ENCODE measurements at regions of chr1 and their contacts with region 1.

Region 1: GRCh38 chr1:65075123-65075976 is 72.7 kb upstream of the AK4 start:
- DNase-seq: no peak
- ATAC-seq: peak; percentile 73 to 98 (median 90)
- H3K4me3 ChIP-seq: no peak overlapping the region
- H3K27ac ChIP-seq: no peak overlapping the region
- H3K4me1 ChIP-seq: no peaks in the 10 kb centered on the region
- H3K27me3 ChIP-seq: no peaks in the 10 kb centered on the region
- CTCF ChIP-seq: peak; percentile 77

Region 2: GRCh38 chr1:64686828-64687724 is 388.3 kb before region 1 on chr1:
- intact Hi-C with region 1: loop called in 1 of 2 experiments (anchors 10 kb)
- DNase-seq: no peak
- ATAC-seq: peak; percentile 61 to 86 (median 64)
- H3K4me3 ChIP-seq: no peak overlapping the region
- H3K27ac ChIP-seq: no peak overlapping the region
- H3K4me1 ChIP-seq: no peaks in the 10 kb centered on the region
- H3K27me3 ChIP-seq: no peaks in the 10 kb centered on the region
- CTCF ChIP-seq: peak; percentile 94

Region 3: DNA sequence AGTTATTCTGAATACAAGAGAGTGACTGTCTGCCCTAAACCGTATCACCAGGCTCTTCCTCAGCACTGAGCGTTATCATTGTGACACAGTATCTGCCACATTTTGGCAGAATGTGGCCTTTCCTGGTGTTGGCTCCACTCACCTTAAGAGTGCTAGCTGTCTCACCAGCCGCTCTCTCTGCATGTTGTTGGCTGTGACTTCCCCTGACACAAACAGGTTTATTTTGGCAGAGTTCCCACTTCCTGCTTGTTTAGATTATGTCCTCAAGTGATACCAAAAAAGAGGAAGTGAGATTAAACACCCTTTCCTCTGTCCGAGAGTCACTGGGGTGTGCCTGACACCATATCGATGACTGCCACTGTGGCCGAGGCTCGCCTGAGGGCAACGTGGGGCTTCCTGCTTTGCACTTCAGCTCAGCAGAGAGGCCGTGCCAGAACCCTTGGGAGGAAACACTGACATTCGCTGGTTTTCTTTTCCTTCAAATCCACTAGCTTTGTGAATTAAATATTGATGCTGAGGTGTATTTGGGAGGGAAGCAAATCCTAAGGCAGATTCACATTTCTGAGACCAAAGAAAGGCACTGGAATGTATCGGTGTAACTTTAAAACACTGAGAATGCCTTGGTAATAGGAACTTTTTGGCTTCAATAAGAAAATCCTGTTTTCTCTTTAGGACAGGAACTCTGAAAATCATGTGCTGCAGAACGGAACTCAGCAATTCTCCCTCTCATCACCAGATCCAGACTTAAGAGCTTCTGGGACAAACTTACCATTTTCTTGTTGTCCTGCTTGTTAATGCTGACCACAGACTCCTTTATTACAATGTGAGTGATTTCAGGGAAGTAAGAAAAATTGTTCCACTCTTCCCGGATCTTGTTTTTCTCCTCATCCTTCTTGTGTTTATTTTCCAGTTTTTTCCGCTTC is 211.1 kb before region 1 on chr1:
- intact Hi-C with region 1: loop called in 1 of 2 experiments (anchors 5 kb)
- DNase-seq: peak; percentile 48 to 81
- ATAC-seq: peak in 3 of 4 donors; percentile 33 to 55 (median 42)
- H3K4me3 ChIP-seq: no peak overlapping the region
- H3K27ac ChIP-seq: peak overlapping the region; percentile 19
- H3K4me1 ChIP-seq: no peaks in the 10 kb centered on the region
- H3K27me3 ChIP-seq: no peaks in the 10 kb centered on the region
- CTCF ChIP-seq: no peak

Region 4: GRCh38 chr1:65027666-65028358 is 47.5 kb before region 1 on chr1:
- intact Hi-C with region 1: no loop called
- DNase-seq: peak; percentile 67 to 82
- ATAC-seq: peak; percentile 76 to 85 (median 76)
- H3K4me3 ChIP-seq: no peak overlapping the region
- H3K27ac ChIP-seq: peak overlapping the region; percentile 33
- H3K4me1 ChIP-seq: peaks cover 16% of the 10 kb centered on the region
- H3K27me3 ChIP-seq: no peaks in the 10 kb centered on the region
- CTCF ChIP-seq: no peak

Region 5: GRCh38 chr1:65148548-65149350 is 73.4 kb after region 1 on chr1:
- intact Hi-C with region 1: loop called in 1 of 2 experiments (anchors 5 kb)
- DNase-seq: peak; percentile 42 to 58
- ATAC-seq: peak; percentile 53 to 70 (median 62)
- H3K4me3 ChIP-seq: peak overlapping the region; percentile 83
- H3K27ac ChIP-seq: peak overlapping the region; percentile 50
- H3K4me1 ChIP-seq: peaks cover 4% of the 10 kb centered on the region
- H3K27me3 ChIP-seq: peaks cover 0 to 13% (median 3%) of the 10 kb centered on the region in 3 donors
- CTCF ChIP-seq: no peak

Region 6: GRCh38 chr1:65209005-65209885 is 133.9 kb after region 1 on chr1:
- intact Hi-C with region 1: loop called in 1 of 2 experiments (anchors 5 kb)
- DNase-seq: no peak
- ATAC-seq: peak; percentile 28 to 68 (median 40)
- H3K4me3 ChIP-seq: no peak overlapping the region
- H3K27ac ChIP-seq: no peak overlapping the region
- H3K4me1 ChIP-seq: no peaks in the 10 kb centered on the region
- H3K27me3 ChIP-seq: no peaks in the 10 kb centered on the region
- CTCF ChIP-seq: peak; percentile 56

Measured in psoas muscle (tissue), 8 donors.